WTC11 (cell line): ENCODE measurements at regions of chr11 and their contacts with region 1.

Region 1: GRCh38 chr11:65646921-65647751 is 9.2 kb downstream of the SIPA1 start:
- DNase-seq: peak; percentile 77
- ATAC-seq: peak; percentile 49
- H3K4me3 Mint-ChIP-seq: peak overlapping the region; percentile 92
- H3K27ac Mint-ChIP-seq: no peak overlapping the region
- H3K4me1 Mint-ChIP-seq: peaks cover 26% of the 10 kb centered on the region
- H3K27me3 Mint-ChIP-seq: peaks cover 3% of the 10 kb centered on the region; the same call in 1 of the 2 replicates
- CTCF ChIP-seq: no peak

Region 2: DNA sequence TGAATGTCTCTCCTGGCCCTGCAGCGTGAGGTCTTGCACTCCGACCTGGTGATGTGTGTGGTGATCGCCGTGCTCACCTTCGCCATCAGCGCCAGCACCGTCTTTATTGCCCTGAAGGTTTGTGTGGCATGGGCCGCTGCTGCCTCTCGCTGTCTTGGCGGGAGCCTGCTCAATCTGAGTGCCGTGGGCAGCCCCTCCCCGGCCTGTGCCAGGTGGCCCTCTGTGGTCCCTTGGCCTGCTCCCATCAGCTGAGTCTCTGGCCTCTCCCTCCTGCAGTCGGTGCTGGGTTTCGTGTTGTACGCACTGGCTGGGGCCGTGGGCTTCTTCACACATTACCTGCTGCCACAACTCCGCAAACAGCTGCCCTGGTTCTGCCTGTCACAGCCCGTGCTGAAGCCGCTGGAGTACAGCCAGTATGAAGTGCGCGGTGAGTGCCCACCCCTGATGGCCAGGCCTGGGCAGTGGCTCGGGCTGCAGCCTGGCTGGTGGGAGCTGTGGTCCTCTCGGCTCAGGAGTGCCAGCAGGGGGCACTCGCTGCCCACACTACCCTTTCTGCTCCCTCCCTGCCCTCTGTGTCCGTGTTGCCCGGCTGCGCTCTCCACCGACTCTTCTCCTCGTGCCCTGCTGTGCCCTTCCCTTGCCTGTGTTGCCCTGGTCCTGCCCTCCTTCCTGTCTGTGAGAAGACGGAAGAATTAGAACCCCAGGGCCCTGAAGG is 21.4 kb before region 1 on chr11:
- CTCF ChIA-PET with region 1: interaction called, 16 read pairs
- POLR2A ChIA-PET with region 1: interaction called, 3 read pairs
- DNase-seq: peak; percentile 52
- ATAC-seq: peak; percentile 71
- H3K4me3 Mint-ChIP-seq: no peak overlapping the region
- H3K27ac Mint-ChIP-seq: no peak overlapping the region
- H3K4me1 Mint-ChIP-seq: no peaks in the 10 kb centered on the region
- H3K27me3 Mint-ChIP-seq: no peaks in the 10 kb centered on the region
- CTCF ChIP-seq: peak; percentile 28; the same call in 1 of the 2 replicates

Region 3: GRCh38 chr11:65695456-65696241 is 48.5 kb after region 1 on chr11:
- CTCF ChIA-PET with region 1: no interaction called
- POLR2A ChIA-PET with region 1: no interaction called
- DNase-seq: no peak
- ATAC-seq: no peak
- H3K4me3 Mint-ChIP-seq: no peak overlapping the region
- H3K27ac Mint-ChIP-seq: no peak overlapping the region
- H3K4me1 Mint-ChIP-seq: peaks cover 3% of the 10 kb centered on the region; the same call in 1 of the 2 replicates
- H3K27me3 Mint-ChIP-seq: peaks cover 12% of the 10 kb centered on the region
- CTCF ChIP-seq: no peak